Breast epithelium (tissue), 4 donors: ENCODE measurements at regions of chr19 and their contacts with region 1.

Region 1: DNA sequence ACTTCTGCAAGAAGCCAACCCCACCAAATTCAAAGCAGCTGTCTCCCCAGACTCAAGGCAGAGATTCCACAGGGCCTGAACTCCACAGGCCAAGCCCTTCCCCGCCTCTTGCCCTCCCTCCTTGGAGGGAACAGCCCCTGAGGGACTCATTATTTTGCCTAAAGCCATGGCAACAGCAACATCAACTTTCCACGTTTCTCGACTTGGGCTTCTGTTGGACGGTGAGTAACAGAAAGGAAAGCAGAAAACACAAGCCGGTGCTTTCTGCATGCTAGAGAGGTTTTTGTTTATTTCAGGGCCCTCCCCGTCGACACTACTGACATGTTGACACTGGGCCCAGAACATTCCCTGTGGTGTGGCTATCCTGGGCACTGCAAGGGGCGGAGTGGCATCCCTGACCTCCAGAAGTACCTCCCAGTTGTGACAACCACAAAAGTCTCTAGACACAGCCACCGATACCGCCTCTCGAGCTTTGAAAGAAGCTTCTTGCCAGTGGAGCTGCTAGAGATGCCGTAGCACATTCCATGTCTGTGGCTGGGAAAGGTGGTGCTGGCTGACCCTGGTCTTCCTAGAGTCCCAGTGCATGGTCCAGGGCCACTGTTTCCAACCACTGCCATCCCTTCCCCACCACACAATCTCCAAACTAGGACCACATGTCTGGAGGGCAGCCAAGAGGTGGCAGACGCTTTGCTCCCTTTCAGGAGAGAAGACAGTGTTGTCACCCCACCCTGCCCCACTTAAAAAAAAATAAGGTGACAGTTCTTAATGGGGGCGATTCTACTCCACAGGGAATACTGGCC is 12.8 kb downstream of the CAPS start:
- DNase-seq: peak; percentile 52 to 57
- H3K4me3 ChIP-seq: no peak overlapping the region
- H3K27ac ChIP-seq: peak overlapping the region; percentile 73 to 90
- H3K4me1 ChIP-seq: no peaks in the 10 kb centered on the region
- H3K27me3 ChIP-seq: no peaks in the 10 kb centered on the region
- CTCF ChIP-seq: no peak
- POLR2A ChIP-seq: no peak

Region 2: DNA sequence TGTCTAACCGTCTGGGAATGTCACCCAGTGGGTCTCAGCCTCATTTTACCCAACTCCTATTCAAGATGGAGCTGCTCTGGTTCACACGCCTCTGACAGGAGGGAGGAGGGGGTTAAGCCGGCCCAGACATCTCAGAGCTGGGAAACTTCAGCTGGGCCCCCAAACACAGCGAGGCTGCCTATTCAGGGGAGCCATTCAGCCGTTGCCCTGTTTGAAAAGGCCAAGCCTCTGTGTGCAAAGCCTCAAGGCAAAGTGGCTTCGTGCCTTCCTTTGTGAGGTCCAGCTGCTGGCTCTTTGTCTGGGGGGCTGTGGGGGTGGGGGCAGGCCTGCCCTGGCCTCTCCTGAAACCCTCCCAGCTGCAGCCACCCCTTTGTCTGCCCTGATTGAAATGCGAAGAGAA is 733.6 kb before region 1 on chr19:
- intact Hi-C with region 1: no loop called
- DNase-seq: no peak
- H3K4me3 ChIP-seq: no peak overlapping the region
- H3K27ac ChIP-seq: no peak overlapping the region
- H3K4me1 ChIP-seq: no peaks in the 10 kb centered on the region
- H3K27me3 ChIP-seq: no peaks in the 10 kb centered on the region
- CTCF ChIP-seq: no peak
- POLR2A ChIP-seq: no peak

Region 3: DNA sequence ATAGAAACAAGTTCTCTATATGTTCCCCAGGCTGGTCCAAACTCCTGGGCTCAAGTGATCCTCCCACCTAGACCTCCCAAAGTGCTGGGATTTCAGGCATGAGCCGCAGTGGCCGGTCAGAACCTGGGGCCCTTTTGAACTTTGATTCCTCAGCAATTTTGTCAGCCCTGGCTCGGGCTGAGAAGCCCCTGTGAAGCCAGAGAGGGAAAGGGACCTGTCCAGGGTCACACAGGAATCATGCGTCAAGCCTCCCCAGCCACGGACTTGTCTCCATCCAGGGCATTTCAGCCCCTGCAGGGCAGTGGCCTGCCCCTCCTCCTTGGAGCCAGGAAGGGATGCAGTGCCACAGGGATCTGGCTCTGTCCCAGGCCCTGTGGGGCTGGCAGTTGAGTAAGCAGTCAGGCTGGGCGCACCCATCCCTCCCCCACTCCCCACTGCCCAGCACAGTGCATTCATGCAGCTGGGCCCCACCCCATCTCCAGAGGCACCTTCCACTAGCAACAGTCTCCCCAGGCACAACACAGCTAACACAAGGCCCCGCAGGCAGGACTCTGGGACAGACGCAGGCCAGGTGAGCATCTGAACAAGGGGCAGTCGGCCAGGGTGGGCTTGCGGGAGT is 13.0 kb before region 1 on chr19 and contains the start of gene CAPS:
- intact Hi-C with region 1: no loop called
- DNase-seq: peak; percentile 37 to 63
- H3K4me3 ChIP-seq: peak within 1 kb of the TSS; percentile 0 to 44 (median 18)
- H3K27ac ChIP-seq: peak within 1 kb of the TSS; percentile 67 to 72
- H3K4me1 ChIP-seq: peaks cover 12 to 17% of the 10 kb centered on the region in 2 donors
- H3K27me3 ChIP-seq: no peaks in the 10 kb centered on the region
- CTCF ChIP-seq: no peak
- POLR2A ChIP-seq: no peak
- total RNA-seq, gene CAPS: 9.4 to 19.0 (median 16.4) TPM

Region 4: GRCh38 chr19:6868351-6868750 is 941.5 kb after region 1 on chr19:
- intact Hi-C with region 1: loop called (anchors 5 kb)
- DNase-seq: no peak
- H3K4me3 ChIP-seq: no peak overlapping the region
- H3K27ac ChIP-seq: no peak overlapping the region
- H3K4me1 ChIP-seq: no peaks in the 10 kb centered on the region
- H3K27me3 ChIP-seq: no peaks in the 10 kb centered on the region
- CTCF ChIP-seq: no peak
- POLR2A ChIP-seq: no peak